ENCODE measurements at regions of chr14 and their contacts with region 1.

Region 1: GRCh38 chr14:90758028-90758889 is 58.0 kb downstream of the TTC7B start:
- DNase-seq: peak; percentile 100
- H3K4me3 ChIP-seq: peak overlapping the region; percentile 52 to 71
- H3K27ac ChIP-seq: peak overlapping the region; percentile 41 to 64; a peak in 3 of 4 replicates
- H3K4me1 ChIP-seq: peaks cover 9 to 21% of the 10 kb centered on the region in 2 experiments; a peak in 3 of 4 replicates
- H3K27me3 ChIP-seq: no peaks in the 10 kb centered on the region
- CTCF ChIP-seq: peak; percentile 74
- EP300 ChIP-seq: no peak
- RAD21 ChIP-seq: peak; percentile 86

Region 2: GRCh38 chr14:90399541-90400444 is 358.5 kb before region 1 on chr14:
- CTCF ChIA-PET with region 1: interaction called, 59 read pairs
- POLR2A ChIA-PET with region 1: interaction called, 11 read pairs
- DNase-seq: peak; percentile 89
- H3K4me3 ChIP-seq: peak overlapping the region; percentile 86 to 99; a peak in 3 of 4 replicates
- H3K27ac ChIP-seq: peak overlapping the region in 1 of 2 experiments; percentile 86; a peak in 3 of 4 replicates
- H3K4me1 ChIP-seq: peaks cover 4 to 26% of the 10 kb centered on the region in 2 experiments; a peak in 3 of 4 replicates
- H3K27me3 ChIP-seq: no peaks in the 10 kb centered on the region
- CTCF ChIP-seq: peak; percentile 100
- EP300 ChIP-seq: peak in 1 of 2 experiments; percentile 26; a peak in 1 of 4 replicates
- RAD21 ChIP-seq: peak; percentile 99

Region 3: DNA sequence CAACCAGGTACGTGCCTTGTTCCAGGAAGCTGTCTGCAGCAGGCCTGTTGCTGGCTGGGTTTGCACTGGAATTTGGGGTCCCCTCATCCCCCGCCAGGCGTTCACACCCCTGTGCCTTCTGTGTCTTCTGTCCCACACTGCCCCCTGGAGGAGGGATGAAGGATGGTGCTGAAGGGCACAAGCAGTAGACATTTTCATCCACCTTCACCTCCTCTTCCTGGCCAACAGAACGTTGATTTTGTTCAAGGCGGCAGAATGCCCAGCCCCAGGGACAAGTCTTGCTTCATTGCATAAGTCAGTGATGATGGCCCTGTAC is 239.4 kb before region 1 on chr14:
- CTCF ChIA-PET with region 1: interaction called, 21 read pairs
- POLR2A ChIA-PET with region 1: interaction called, 3 read pairs
- DNase-seq: no peak
- H3K4me3 ChIP-seq: no peak overlapping the region
- H3K27ac ChIP-seq: no peak overlapping the region
- H3K4me1 ChIP-seq: peaks cover 20 to 41% of the 10 kb centered on the region in 2 experiments; a peak in 3 of 4 replicates
- H3K27me3 ChIP-seq: no peaks in the 10 kb centered on the region
- CTCF ChIP-seq: peak; percentile 58
- EP300 ChIP-seq: no peak
- RAD21 ChIP-seq: peak; percentile 66

Region 4: DNA sequence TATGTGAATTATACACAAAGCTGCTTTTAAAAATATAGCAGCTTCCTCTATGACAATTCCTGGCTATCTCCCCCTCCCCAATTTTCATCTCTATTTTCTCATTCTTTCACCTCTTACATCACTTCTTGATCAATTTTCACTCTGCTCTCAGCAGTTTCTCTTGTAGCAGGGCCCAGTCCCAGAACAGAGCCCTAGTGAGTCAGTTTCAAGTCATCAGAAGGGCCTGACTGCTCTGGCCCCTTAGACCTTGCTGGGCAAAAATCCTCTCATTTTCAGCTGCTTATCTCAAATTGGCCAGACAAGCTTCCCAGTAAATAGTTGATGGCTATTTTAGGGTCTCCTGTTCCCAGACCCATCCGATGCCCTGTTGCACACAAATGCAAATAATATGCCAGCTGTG is 43.4 kb before region 1 on chr14:
- CTCF ChIA-PET with region 1: interaction called, 19 read pairs
- POLR2A ChIA-PET with region 1: no interaction called
- DNase-seq: no peak
- H3K4me3 ChIP-seq: no peak overlapping the region
- H3K27ac ChIP-seq: no peak overlapping the region
- H3K4me1 ChIP-seq: peaks cover 3 to 12% of the 10 kb centered on the region in 2 experiments; a peak in 2 of 4 replicates
- H3K27me3 ChIP-seq: no peaks in the 10 kb centered on the region
- CTCF ChIP-seq: no peak
- EP300 ChIP-seq: no peak
- RAD21 ChIP-seq: no peak

Region 5: DNA sequence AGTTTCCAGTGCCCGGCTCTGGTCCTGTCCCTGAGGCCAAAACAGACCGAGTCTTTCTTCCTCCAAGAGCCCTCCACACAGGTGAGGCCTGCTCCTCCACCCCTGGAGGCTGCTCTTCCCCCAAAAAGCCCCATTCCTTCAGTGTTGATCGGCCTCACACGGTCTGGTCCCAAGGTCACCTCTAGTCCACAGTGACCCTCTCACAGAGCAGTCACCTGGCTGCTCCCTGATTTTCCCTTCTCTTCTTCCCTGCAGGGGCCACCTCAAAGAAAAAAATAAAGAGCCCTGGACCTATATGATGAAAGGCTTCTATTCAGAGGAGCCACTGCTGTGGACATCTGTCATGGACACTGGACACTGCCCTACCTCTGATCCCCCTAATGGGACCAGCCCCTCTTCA is 15.4 kb after region 1 on chr14:
- CTCF ChIA-PET with region 1: interaction called, 61 read pairs
- POLR2A ChIA-PET with region 1: no interaction called
- DNase-seq: no peak
- H3K4me3 ChIP-seq: no peak overlapping the region
- H3K27ac ChIP-seq: no peak overlapping the region
- H3K4me1 ChIP-seq: peaks cover 0 to 16% of the 10 kb centered on the region in 2 experiments; a peak in 1 of 4 replicates
- H3K27me3 ChIP-seq: no peaks in the 10 kb centered on the region
- CTCF ChIP-seq: no peak
- EP300 ChIP-seq: no peak
- RAD21 ChIP-seq: no peak

Region 6: DNA sequence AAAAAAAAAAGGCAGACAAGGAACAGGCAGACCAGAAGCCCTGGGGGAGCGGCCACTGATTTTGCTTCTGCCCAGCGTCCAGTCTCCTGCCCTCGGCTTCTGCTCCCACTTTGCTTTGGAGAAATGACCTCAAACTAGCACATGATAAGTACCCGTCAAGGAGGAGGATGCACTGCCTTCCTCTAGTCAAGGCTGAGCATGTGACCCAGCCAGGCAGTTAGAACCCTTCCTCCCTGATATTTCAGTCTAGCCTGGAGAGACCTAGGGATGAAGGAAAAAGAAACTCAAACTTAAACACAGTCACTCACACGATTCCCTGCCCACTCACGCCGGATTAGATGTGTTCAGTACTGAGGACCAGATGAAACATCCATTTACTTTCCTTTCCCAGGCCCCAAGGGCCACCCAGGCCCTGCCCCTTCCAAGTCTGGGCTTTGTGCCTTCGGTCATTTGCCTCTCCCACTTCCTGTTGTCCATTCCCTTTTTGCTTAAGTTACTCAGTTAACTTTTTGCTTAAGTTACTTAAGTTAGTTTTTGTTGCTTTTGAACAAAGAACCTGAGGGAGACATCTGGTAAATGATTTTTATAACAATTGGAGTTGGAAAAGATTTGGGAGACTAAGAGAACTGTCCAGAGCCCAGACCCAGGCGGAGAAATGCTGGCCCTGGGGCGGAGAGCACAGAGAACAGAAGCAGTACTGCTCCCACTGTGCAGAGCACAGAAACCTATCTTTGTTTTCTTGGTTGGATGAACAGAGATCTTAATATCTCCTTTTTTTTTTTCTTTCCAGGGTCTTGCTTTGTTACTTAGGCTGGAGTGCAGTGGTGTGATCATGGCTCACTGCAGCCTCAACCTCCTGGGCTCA is 81.0 kb after region 1 on chr14:
- CTCF ChIA-PET with region 1: no interaction called
- POLR2A ChIA-PET with region 1: no interaction called
- DNase-seq: no peak
- H3K4me3 ChIP-seq: no peak overlapping the region
- H3K27ac ChIP-seq: no peak overlapping the region
- H3K4me1 ChIP-seq: peaks cover 0 to 4% of the 10 kb centered on the region in 2 experiments; a peak in 1 of 4 replicates
- H3K27me3 ChIP-seq: no peaks in the 10 kb centered on the region
- CTCF ChIP-seq: no peak
- EP300 ChIP-seq: no peak
- RAD21 ChIP-seq: no peak